Esophagus muscularis mucosa (tissue), 4 donors: ENCODE measurements at regions of chr5 and their contacts with region 1.

Region 1: GRCh38 chr5:42767491-42768105 is 11.0 kb downstream of the CCDC152 start:
- DNase-seq: no peak
- H3K4me3 ChIP-seq: no peak overlapping the region
- H3K27ac ChIP-seq: no peak overlapping the region
- H3K4me1 ChIP-seq: no peaks in the 10 kb centered on the region
- H3K27me3 ChIP-seq: peaks cover 0 to 5% (median 0%) of the 10 kb centered on the region in 4 donors
- CTCF ChIP-seq: peak; percentile 48 to 52 (median 50)
- EP300 ChIP-seq: no peak
- POLR2A ChIP-seq: no peak

Region 2: DNA sequence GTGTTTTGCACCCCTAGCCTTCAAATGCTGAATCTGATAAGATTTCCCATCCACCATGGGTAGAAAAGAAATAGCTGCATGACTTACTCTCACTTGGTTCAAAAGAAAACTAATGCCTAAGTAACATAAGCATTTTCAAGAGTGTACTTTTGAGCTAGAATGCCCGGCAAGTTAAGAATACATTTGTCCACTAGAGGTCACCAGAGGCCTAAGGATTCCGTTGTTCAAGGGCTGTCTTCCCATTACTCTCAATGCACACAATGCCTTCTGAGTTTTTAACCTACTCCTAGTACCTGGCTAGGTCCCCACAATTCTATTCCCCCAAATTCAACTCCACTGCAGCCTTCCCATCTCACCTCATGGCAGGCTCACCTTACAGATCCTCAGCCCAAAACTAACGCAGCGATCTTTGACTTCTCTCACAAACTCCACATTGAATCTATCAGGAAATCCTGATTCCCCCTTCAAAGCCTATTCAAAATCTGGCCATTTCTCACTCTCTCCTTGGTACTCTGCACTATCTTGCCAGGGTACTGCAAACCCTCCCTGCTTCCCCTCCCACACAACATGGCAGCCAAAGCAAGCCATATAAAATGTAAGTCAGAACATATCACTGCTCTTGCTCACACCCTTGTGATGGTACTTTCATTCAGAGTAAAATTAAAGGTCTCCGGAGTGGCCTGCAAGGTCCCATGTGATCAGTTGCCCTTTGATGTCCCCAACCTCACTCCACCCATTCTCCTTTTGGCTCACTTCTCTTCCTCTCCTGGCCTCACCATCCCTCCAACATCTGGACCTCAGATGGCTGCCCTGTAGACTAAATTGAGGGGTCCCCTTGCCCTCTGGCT is 910.7 kb before region 1 on chr5:
- intact Hi-C with region 1: loop called (anchors 10 kb)
- DNase-seq: no peak
- H3K4me3 ChIP-seq: no peak overlapping the region
- H3K27ac ChIP-seq: no peak overlapping the region
- H3K4me1 ChIP-seq: peaks cover 0 to 7% (median 3%) of the 10 kb centered on the region in 4 donors
- H3K27me3 ChIP-seq: no peaks in the 10 kb centered on the region
- CTCF ChIP-seq: peak; percentile 65 to 78 (median 76)
- EP300 ChIP-seq: no peak
- POLR2A ChIP-seq: no peak

Region 3: DNA sequence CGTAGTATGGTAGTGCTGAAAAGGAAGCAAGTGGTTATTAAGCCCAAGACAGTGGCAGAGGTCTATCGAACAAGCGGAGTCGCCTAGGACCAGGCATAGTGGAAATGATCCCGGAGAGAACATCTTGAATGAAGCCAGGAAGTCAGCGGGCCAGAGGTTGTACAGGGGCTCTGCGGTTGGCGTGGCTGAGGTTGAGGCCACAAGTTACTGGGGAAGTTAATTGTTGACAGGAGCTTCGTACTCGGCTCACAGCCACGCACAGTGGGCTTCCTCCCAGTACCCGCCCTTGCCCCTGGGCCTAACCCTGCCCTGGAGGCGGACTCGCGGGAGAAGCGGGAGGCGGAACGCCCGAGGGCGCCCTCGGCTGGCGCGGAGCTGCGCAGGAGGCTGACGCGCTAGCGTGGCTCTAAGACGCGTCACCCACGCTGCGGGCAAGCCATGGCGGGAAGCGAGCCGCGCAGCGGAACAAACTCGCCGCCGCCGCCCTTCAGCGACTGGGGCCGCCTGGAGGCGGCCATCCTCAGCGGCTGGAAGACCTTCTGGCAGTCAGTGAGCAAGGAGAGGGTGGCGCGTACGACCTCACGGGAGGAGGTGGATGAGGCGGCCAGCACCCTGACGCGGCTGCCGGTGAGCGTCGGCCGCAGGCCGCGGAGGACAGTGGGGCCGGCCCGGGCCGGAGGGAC is 842.6 kb before region 1 on chr5 and contains the start of gene FBXO4:
- intact Hi-C with region 1: loop called (anchors 5 kb)
- DNase-seq: peak; percentile 94
- H3K4me3 ChIP-seq: peak within 1 kb of the TSS; percentile 73 to 88 (median 74)
- H3K27ac ChIP-seq: peak within 1 kb of the TSS; percentile 91 to 97 (median 94)
- H3K4me1 ChIP-seq: peaks cover 6 to 17% (median 13%) of the 10 kb centered on the region in 4 donors
- H3K27me3 ChIP-seq: no peaks in the 10 kb centered on the region
- CTCF ChIP-seq: peak; percentile 46 to 64 (median 47)
- EP300 ChIP-seq: no peak
- POLR2A ChIP-seq: no peak
- total RNA-seq, gene FBXO4: 5.1 to 8.8 (median 7.5) TPM

Region 4: GRCh38 chr5:42005561-42006153 is 761.9 kb before region 1 on chr5:
- intact Hi-C with region 1: loop called (anchors 5 kb)
- DNase-seq: no peak
- H3K4me3 ChIP-seq: no peak overlapping the region
- H3K27ac ChIP-seq: no peak overlapping the region
- H3K4me1 ChIP-seq: no peaks in the 10 kb centered on the region
- H3K27me3 ChIP-seq: no peaks in the 10 kb centered on the region
- CTCF ChIP-seq: peak; percentile 44 to 62 (median 56)
- EP300 ChIP-seq: no peak
- POLR2A ChIP-seq: no peak

Region 5: GRCh38 chr5:42423285-42424165 is 344.1 kb before region 1 on chr5 and contains the start of gene GHR:
- intact Hi-C with region 1: loop called (anchors 10 kb)
- DNase-seq: peak; percentile 94
- H3K4me3 ChIP-seq: peak within 1 kb of the TSS; percentile 75 to 87 (median 79)
- H3K27ac ChIP-seq: peak within 1 kb of the TSS; percentile 83 to 90 (median 84)
- H3K4me1 ChIP-seq: peaks cover 11 to 35% (median 33%) of the 10 kb centered on the region in 4 donors
- H3K27me3 ChIP-seq: no peaks in the 10 kb centered on the region
- CTCF ChIP-seq: peak; percentile 72 to 87 (median 76)
- EP300 ChIP-seq: no peak
- POLR2A ChIP-seq: no peak
- total RNA-seq, gene GHR: 5.3 to 9.1 (median 6.5) TPM

Region 6: GRCh38 chr5:42985129-42986037 is 217.8 kb after region 1 on chr5:
- intact Hi-C with region 1: no loop called
- DNase-seq: no peak
- H3K4me3 ChIP-seq: no peak overlapping the region
- H3K27ac ChIP-seq: no peak overlapping the region
- H3K4me1 ChIP-seq: peaks cover 0 to 5% (median 0%) of the 10 kb centered on the region in 4 donors
- H3K27me3 ChIP-seq: peaks cover 0 to 49% (median 4%) of the 10 kb centered on the region in 4 donors
- CTCF ChIP-seq: no peak
- EP300 ChIP-seq: no peak
- POLR2A ChIP-seq: no peak